HCT116 (cell line): ENCODE measurements at regions of chr1 and their contacts with region 1.

Region 1: GRCh38 chr1:21368515-21369289 is 71.2 kb upstream of the NBPF3 start:
- DNase-seq: peak; percentile 77
- ATAC-seq: peak; percentile 97
- H3K4me3 ChIP-seq: no peak overlapping the region
- H3K27ac ChIP-seq: no peak overlapping the region
- H3K4me1 ChIP-seq: peaks cover 0 to 11% of the 10 kb centered on the region in 2 experiments; a peak in 2 of 4 replicates
- H3K27me3 ChIP-seq: no peaks in the 10 kb centered on the region
- CTCF ChIP-seq: peak; percentile 98 to 100 (median 99)
- POLR2A ChIP-seq: no peak
- RAD21 ChIP-seq: peak; percentile 100

Region 2: DNA sequence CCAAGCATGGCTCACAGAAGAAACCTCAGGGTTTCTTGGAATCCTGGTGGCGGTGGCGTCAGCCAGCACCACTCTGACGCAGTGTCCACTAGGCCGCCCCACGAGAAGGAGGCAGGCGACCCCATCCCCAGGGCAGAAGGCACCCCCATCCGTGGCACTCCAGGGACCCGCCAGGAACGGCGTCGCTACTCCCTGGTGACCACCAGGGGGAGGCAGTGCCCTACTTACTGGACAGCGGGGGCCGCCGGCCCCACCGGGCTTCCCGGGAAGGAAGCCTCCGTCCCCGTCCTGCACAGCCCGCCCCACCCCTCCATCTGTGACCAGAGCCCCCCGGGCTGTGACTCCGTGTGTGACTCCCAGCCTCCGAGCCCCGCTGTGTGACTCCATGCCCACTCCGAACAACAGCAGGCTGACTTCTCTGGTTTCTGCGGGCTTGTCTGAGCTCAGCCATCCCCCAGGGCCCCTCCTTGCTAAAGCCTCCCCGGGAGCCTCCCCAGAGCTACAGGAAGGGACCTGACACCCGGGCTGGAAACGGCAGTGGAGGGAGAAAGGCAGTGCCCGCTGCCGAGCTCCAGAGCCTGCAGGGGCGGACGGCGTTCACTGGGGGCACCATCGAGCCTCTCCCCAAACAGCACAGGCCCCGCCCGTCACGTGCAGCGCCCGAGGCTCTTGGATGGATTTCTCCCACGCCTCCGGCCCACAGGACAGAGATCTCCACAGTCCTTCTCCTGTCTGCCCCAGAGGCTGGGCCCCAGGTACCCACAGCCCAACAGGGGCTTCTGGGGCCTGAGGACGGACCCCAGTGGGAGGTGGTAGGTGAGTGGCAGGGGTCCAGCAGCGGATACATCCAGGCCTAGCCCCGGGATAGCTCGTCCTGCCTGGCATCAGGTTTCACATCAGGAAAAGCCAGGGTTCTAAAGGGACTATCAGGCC is 672.0 kb before region 1 on chr1:
- CTCF ChIA-PET with region 1: interaction called, 17 read pairs
- POLR2A ChIA-PET with region 1: no interaction called
- RAD21 ChIA-PET with region 1: interaction called in 1 of 2 experiments, 7 read pairs
- intact Hi-C with region 1: loop called (anchors 1 kb)
- DNase-seq: peak; percentile 69
- ATAC-seq: peak; percentile 90
- H3K4me3 ChIP-seq: peak overlapping the region; percentile 44 to 62
- H3K27ac ChIP-seq: peak overlapping the region; percentile 88
- H3K4me1 ChIP-seq: peaks cover 25 to 39% of the 10 kb centered on the region in 2 experiments
- H3K27me3 ChIP-seq: no peaks in the 10 kb centered on the region
- CTCF ChIP-seq: peak; percentile 77 to 86 (median 78)
- POLR2A ChIP-seq: no peak
- RAD21 ChIP-seq: peak; percentile 91

Region 3: GRCh38 chr1:21232044-21232443 is 136.7 kb before region 1 on chr1:
- CTCF ChIA-PET with region 1: interaction called, 67 read pairs
- POLR2A ChIA-PET with region 1: interaction called, 7 read pairs
- RAD21 ChIA-PET with region 1: interaction called, 10 to 14 read pairs
- intact Hi-C with region 1: loop called (anchors 1 kb)
- DNase-seq: peak; percentile 26
- ATAC-seq: peak; percentile 81
- H3K4me3 ChIP-seq: no peak overlapping the region
- H3K27ac ChIP-seq: no peak overlapping the region
- H3K4me1 ChIP-seq: peaks cover 0 to 10% of the 10 kb centered on the region in 2 experiments; a peak in 1 of 4 replicates
- H3K27me3 ChIP-seq: no peaks in the 10 kb centered on the region
- CTCF ChIP-seq: peak; percentile 61 to 83 (median 76)
- POLR2A ChIP-seq: no peak
- RAD21 ChIP-seq: peak; percentile 90

Region 4: DNA sequence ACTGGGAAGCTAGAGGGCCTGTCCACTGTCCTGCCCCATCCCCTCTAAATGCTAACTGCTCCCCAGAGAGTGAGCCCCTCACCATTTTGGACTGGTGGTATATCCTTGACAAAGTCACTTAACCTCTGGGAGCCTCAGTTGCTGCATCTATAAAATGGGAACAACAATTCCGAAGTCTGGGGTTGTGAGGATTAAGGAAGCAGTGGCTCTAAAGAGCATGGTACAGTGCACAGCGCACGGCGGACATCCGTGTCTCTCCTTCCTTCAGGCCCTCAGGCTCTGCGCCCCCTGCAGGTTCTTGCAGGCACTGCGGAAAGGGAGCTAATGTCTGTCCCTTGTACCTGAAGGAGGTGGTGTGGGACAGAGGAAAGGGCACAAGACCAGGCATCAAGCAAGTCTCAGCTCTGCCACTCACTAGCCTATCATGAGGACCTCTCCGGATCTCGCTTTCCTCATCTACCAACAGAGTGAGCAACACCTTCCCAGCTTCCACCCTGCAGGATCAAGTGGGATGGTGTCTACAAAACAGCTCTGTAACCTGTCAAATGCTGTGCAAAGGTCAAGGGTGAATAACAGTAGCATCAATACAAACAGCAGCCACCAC is 98.5 kb before region 1 on chr1:
- CTCF ChIA-PET with region 1: interaction called, 21 read pairs
- POLR2A ChIA-PET with region 1: no interaction called
- RAD21 ChIA-PET with region 1: interaction called, 9 to 14 read pairs
- intact Hi-C with region 1: no loop called
- DNase-seq: peak; percentile 54
- ATAC-seq: peak; percentile 94
- H3K4me3 ChIP-seq: no peak overlapping the region
- H3K27ac ChIP-seq: no peak overlapping the region
- H3K4me1 ChIP-seq: peaks cover 10 to 35% of the 10 kb centered on the region in 2 experiments
- H3K27me3 ChIP-seq: no peaks in the 10 kb centered on the region
- CTCF ChIP-seq: peak; percentile 99 to 100 (median 99)
- POLR2A ChIP-seq: no peak
- RAD21 ChIP-seq: peak; percentile 89

Region 5: GRCh38 chr1:21511579-21512522 is 143.1 kb after region 1 on chr1:
- CTCF ChIA-PET with region 1: interaction called, 22 read pairs
- POLR2A ChIA-PET with region 1: no interaction called
- RAD21 ChIA-PET with region 1: no interaction called
- intact Hi-C with region 1: no loop called
- DNase-seq: no peak
- ATAC-seq: no peak
- H3K4me3 ChIP-seq: no peak overlapping the region
- H3K27ac ChIP-seq: no peak overlapping the region
- H3K4me1 ChIP-seq: peaks cover 2 to 5% of the 10 kb centered on the region in 2 experiments; a peak in 3 of 4 replicates
- H3K27me3 ChIP-seq: no peaks in the 10 kb centered on the region
- CTCF ChIP-seq: no peak
- POLR2A ChIP-seq: no peak
- RAD21 ChIP-seq: no peak

Region 6: GRCh38 chr1:21594935-21595897 is 226.5 kb after region 1 on chr1:
- CTCF ChIA-PET with region 1: interaction called, 16 read pairs
- POLR2A ChIA-PET with region 1: no interaction called
- RAD21 ChIA-PET with region 1: interaction called in 1 of 2 experiments, 3 read pairs
- intact Hi-C with region 1: loop called (anchors 1 kb)
- DNase-seq: peak; percentile 23
- ATAC-seq: peak; percentile 78
- H3K4me3 ChIP-seq: no peak overlapping the region
- H3K27ac ChIP-seq: no peak overlapping the region
- H3K4me1 ChIP-seq: peaks cover 7 to 13% of the 10 kb centered on the region in 2 experiments; a peak in 3 of 4 replicates
- H3K27me3 ChIP-seq: no peaks in the 10 kb centered on the region
- CTCF ChIP-seq: peak; percentile 70 to 90 (median 76)
- POLR2A ChIP-seq: no peak
- RAD21 ChIP-seq: peak; percentile 92